ENCODE measurements at regions of chr19 and their contacts with region 1.

Region 1: DNA sequence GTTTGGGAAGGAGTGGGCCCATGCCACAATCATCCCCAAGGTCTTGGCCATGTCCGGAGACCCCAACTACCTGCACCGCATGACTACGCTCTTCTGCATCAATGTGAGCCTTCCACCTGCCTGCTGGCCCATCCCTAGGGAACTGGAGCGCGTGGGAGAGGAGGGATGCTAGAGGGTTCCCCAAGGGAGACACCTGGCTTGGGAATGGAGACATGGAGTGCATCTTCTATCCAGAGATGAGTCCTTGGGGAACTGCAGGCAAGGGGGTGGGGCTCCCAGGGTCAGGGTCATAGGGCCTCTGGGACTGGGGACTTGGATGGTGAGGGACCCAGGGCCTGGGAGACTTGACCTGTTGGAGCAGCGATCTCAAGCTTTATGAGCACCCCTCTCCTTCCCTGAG is 31.2 kb downstream of the PPP2R1A start:
- DNase-seq: no peak
- ATAC-seq: no peak
- H3K4me3 ChIP-seq: no peak overlapping the region
- H3K4me3 Mint-ChIP-seq: no peak overlapping the region
- H3K27ac ChIP-seq: no peak overlapping the region
- H3K27ac Mint-ChIP-seq: peak overlapping the region in 1 of 9 donors; percentile 21
- H3K4me1 ChIP-seq: no peaks in the 10 kb centered on the region
- H3K4me1 Mint-ChIP-seq: peaks cover 0 to 5% (median under 1%) of the 10 kb centered on the region in 7 donors
- H3K27me3 ChIP-seq: no peaks in the 10 kb centered on the region
- H3K27me3 Mint-ChIP-seq: no peaks in the 10 kb centered on the region

Region 2: GRCh38 chr19:52237771-52238400 is 16.9 kb after region 1 on chr19:
- CTCF ChIA-PET with region 1: no interaction called
- POLR2A ChIA-PET with region 1: no interaction called
- intact Hi-C with region 1: no loop called
- DNase-seq: peak in 8 of 9 donors; percentile 26 to 60 (median 50)
- ATAC-seq: peak; percentile 88
- H3K4me3 ChIP-seq: no peak overlapping the region
- H3K4me3 Mint-ChIP-seq: no peak overlapping the region
- H3K27ac ChIP-seq: no peak overlapping the region
- H3K27ac Mint-ChIP-seq: peak overlapping the region in 1 of 9 donors; percentile 26
- H3K4me1 ChIP-seq: no peaks in the 10 kb centered on the region
- H3K4me1 Mint-ChIP-seq: peaks cover 0 to 6% (median 0%) of the 10 kb centered on the region in 7 donors
- H3K27me3 ChIP-seq: no peaks in the 10 kb centered on the region
- H3K27me3 Mint-ChIP-seq: peaks cover 0 to 2% (median 0%) of the 10 kb centered on the region in 5 donors

Region 3: DNA sequence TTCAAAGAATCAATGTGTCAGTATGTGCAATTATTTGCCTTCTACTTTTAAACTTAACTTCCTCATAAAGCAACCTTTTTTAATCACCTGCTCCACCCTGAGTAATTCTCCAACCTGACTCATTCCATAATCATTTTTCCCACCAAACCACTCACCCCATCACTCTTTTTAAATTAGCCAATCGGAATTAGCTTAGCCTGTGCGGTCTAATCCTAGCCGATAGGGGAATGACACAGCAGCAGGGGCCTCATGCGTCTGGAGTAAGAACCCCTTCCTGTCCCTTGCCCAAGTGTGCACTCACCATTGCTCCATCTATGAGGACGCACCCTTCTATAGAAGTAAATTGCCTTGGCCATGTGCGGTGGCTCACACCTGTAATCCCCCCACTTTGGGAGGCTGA is 444.5 kb after region 1 on chr19:
- CTCF ChIA-PET with region 1: no interaction called
- POLR2A ChIA-PET with region 1: no interaction called
- intact Hi-C with region 1: no loop called
- DNase-seq: no peak
- ATAC-seq: no peak
- H3K4me3 ChIP-seq: no peak overlapping the region
- H3K4me3 Mint-ChIP-seq: no peak overlapping the region
- H3K27ac ChIP-seq: no peak overlapping the region
- H3K27ac Mint-ChIP-seq: no peak overlapping the region
- H3K4me1 ChIP-seq: no peaks in the 10 kb centered on the region
- H3K4me1 Mint-ChIP-seq: peaks cover under 1 to 16% (median 7%) of the 10 kb centered on the region in 7 donors
- H3K27me3 ChIP-seq: no peaks in the 10 kb centered on the region
- H3K27me3 Mint-ChIP-seq: no peaks in the 10 kb centered on the region

Region 4: DNA sequence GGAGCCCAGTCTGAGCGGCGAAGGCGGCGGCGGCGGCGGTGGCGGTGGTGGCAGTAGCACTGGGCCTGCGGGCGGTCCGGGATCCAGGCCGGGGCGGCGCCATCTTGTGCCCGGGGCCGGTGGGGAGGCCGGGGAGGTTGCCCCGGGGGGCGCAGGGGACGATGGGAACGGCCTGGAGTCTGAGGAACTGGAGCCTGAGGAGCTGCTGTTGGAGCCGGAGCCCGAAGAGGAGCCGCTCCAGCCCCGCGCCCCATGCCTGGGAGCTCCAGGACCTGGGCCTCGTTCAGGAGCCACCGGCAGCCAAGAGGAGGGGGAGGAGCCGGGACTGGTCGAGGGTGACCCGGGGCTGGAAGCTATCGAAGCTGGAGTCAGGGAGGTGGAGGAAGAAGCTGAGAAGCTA is 588.8 kb after region 1 on chr19:
- CTCF ChIA-PET with region 1: no interaction called
- POLR2A ChIA-PET with region 1: interaction called, 10 read pairs
- intact Hi-C with region 1: no loop called
- DNase-seq: no peak
- ATAC-seq: no peak
- H3K4me3 ChIP-seq: no peak overlapping the region
- H3K4me3 Mint-ChIP-seq: no peak overlapping the region
- H3K27ac ChIP-seq: no peak overlapping the region
- H3K27ac Mint-ChIP-seq: no peak overlapping the region
- H3K4me1 ChIP-seq: no peaks in the 10 kb centered on the region
- H3K4me1 Mint-ChIP-seq: no peaks in the 10 kb centered on the region
- H3K27me3 ChIP-seq: no peaks in the 10 kb centered on the region
- H3K27me3 Mint-ChIP-seq: no peaks in the 10 kb centered on the region